AG04449 (cell line): ENCODE measurements at regions of chr12 and their contacts with region 1.

Region 1: GRCh38 chr12:43805860-43806736 is at the start of gene TWF1:
- DNase-seq: no peak
- H3K4me3 ChIP-seq: peak within 1 kb of the TSS; percentile 89
- CTCF ChIP-seq: peak; percentile 53

Region 2: DNA sequence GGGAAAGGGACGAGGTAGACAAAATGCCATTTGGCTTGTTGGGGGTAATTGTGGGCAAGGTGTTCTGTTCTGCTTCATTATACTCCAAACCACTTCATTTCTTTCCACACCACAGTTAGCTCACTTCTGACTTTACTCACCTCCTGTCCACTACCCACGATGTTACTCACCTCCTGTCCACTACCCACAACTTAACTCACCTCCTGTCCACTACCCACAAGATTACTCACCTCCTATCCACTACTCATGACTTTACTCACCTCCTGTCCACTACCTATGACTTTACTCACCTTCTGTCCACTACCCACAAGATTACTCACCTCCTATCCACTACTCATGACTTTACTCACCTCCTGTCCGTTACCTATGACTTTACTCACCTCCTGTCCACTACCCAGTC is 10.1 kb after region 1 on chr12:
- CTCF ChIA-PET with region 1: interaction called, 18 read pairs
- POLR2A ChIA-PET with region 1: no interaction called
- DNase-seq: no peak
- H3K4me3 ChIP-seq: no peak overlapping the region
- CTCF ChIP-seq: no peak

Region 3: DNA sequence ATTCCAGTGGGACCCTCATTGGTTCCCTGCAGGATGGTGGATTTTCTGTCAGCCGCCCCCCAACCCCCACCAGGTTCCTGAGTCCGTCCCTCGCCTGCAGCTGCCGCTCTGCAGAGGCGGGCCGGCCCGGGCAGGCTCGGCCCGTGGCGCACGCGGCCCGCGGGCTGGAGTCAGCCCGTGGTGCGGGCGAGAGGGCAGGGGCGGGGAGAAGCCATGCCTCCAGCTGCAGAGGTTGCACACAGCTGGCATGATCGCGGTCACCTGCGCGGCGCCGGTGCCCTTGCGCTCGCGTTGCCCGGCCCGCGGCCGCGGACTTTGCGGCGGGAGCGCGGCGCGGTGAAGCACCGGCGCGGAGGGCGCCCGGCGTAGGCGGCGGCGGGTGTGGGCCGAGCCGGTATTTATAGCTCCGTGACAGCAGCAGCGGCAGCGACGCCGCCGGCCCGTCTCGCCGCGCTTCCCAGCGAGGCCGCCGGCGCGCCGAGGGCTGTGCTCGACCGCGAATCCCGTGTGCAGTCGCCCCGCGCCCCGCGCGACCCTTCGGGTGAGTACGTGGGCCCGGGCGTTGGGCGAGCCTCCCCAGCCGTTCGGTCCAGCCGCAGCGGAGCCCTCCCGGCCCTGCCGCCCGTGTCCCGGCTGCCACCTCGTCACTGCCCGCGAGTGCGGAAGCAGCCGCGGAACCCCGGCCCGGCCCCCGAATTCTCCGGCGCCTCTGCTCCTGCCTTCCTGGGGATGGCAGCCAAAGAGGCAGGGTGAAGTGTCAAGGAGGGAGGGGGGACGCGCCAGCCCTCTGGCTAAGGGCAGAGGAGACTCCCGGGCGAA is 29.8 kb after region 1 on chr12 and contains the start of gene TMEM117:
- CTCF ChIA-PET with region 1: interaction called, 3 read pairs
- POLR2A ChIA-PET with region 1: interaction called, 17 read pairs
- DNase-seq: no peak
- H3K4me3 ChIP-seq: peak within 1 kb of the TSS; percentile 72
- CTCF ChIP-seq: no peak